ENCODE measurements at regions of chr1 and their contacts with region 1.

Region 1: DNA sequence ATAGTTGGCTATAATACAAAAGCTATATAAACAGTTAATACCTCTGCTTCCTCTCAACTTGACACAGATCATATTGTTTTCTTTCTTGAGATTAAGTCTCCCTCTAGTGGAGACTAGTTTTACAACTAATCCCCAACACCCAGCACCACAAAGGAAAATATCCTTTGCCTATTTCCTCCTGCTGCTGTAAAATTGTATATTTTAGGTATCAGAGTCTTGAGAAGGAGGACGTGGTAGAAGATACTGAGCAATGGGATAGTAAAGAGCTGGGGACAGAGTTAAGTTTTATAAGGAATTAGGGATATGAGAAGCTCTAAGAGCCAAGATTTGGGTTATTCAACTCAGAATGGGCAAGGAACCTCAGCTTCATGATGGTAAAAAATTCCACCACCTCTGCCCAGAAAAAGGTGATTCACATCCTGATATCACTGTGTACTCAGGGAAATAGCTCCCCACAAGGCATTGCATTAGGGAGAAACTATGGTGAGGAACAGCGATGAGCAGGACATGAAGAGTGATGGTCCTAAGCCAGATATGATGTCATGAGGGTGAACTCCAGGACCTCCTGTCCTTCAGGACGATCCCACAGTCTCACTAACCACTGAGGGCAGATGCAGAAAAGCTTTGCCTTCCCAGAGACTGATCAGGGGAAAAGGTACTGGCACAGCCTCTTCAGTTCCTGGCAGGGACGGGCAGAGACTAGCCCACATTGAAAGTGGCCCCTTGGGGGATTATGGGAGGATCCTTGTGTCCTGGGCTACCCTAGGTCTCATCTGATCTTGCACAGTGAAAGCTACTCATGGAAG is 14.7 kb upstream of the CFAP126 start:
- DNase-seq: no peak
- H3K4me3 Mint-ChIP-seq: no peak overlapping the region
- H3K27ac Mint-ChIP-seq: no peak overlapping the region
- H3K4me1 Mint-ChIP-seq: peaks cover 18% of the 10 kb centered on the region
- H3K27me3 Mint-ChIP-seq: no peaks in the 10 kb centered on the region

Region 2: DNA sequence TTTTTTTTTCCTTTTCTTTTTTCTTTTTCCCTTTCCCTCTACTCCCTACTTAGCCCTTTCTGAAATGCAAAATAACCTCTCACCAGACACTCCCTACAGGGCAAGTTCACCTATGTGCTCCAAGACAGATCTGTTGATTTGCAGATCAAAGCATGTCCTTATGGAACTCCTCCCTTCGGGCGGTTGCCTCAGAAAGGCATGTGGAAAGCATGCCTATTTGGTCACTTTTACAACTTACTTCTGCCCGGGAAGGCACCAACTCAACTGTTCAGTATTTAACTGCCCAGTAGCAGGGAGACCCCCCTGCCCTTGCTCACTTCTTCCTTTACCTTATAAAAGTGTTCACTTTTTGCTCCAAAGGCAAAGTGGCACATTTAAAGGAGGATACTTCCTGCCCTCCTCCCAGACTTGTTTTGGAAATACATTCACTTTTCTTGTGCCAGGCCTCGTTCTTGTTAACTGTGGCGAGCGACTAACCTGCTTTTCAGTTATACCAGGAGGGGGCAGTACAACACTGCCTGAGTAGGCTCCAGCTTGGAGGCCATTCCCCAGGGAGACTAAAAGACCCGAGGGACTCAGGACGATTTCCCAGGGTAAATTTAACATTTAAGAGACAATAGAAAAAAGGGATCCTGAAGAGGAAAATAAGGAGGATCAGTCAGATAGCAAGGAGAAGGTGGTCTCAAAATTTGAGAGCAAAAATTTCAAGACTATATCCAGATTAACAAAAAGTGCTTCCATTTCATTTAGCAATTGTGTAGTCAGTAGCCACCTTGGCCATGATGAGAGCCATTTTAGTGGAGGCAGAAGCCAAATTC is 655.7 kb before region 1 on chr1:
- CTCF ChIA-PET with region 1: no interaction called
- intact Hi-C with region 1: no loop called
- DNase-seq: peak; percentile 81
- H3K4me3 Mint-ChIP-seq: no peak overlapping the region
- H3K27ac Mint-ChIP-seq: no peak overlapping the region
- H3K4me1 Mint-ChIP-seq: peaks cover 34% of the 10 kb centered on the region
- H3K27me3 Mint-ChIP-seq: no peaks in the 10 kb centered on the region

Region 3: GRCh38 chr1:161021165-161021960 is 361.1 kb before region 1 on chr1:
- CTCF ChIA-PET with region 1: no interaction called
- intact Hi-C with region 1: no loop called
- DNase-seq: peak; percentile 94
- H3K4me3 Mint-ChIP-seq: peak overlapping the region; percentile 92
- H3K27ac Mint-ChIP-seq: peak overlapping the region; percentile 76
- H3K4me1 Mint-ChIP-seq: peaks cover 35% of the 10 kb centered on the region
- H3K27me3 Mint-ChIP-seq: no peaks in the 10 kb centered on the region

Region 4: DNA sequence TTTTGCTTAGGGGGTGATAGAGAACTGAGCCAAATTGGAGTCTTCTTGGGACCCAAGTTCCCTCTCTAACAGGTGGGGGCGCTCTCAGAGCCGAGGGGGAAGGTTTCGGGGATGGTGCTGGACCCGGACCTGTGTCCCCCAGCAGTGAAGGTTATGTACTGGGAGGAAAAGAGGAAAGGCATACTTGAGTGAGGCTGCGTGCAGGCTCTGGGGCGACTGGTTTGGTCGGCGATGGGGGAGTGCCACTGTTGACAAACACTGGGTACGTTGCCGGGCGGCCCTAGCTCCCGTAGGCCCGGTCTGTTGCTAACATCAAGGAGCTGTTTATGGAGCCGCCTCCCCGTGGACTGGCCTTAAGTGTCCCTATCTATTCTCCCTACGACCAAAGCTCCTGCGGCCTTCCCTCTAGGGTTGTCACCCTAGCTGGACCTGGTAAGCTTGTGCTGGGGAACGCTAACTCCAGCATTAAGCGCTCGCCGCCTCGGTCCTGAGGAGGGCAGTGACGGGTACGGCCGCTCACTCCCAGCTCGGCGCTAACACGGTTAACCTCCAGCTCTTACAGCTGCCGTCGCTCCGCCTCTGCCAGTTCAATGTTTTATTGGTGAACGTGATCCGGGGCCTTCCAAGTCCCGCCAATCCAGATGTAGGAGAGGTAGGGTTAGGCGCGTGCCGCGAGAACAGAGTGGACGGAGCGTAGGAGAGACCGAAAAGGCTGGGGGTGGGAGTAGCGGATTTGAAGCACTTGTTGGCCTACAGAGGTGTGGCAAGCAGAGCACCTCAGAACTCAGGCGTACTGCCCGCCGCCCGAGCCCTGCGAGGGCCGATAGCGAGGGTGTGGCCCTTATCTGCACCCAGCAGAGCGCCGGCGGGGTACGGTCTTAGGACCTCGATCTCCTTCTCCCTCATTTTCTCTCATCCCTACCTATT is 216.4 kb before region 1 on chr1 and contains the start of gene PPOX:
- CTCF ChIA-PET with region 1: interaction called, 15 read pairs
- intact Hi-C with region 1: loop called (anchors 5 kb)
- DNase-seq: peak; percentile 97
- H3K4me3 Mint-ChIP-seq: peak within 1 kb of the TSS; percentile 87
- H3K27ac Mint-ChIP-seq: peak within 1 kb of the TSS; percentile 87
- H3K4me1 Mint-ChIP-seq: peaks cover 49% of the 10 kb centered on the region
- H3K27me3 Mint-ChIP-seq: no peaks in the 10 kb centered on the region
- total RNA-seq, gene PPOX: 24.9 to 26.0 TPM

Region 5: GRCh38 chr1:161192476-161193465 is 189.6 kb before region 1 on chr1:
- CTCF ChIA-PET with region 1: interaction called, 42 read pairs
- intact Hi-C with region 1: loop called (anchors 1 kb)
- DNase-seq: peak; percentile 84
- H3K4me3 Mint-ChIP-seq: no peak overlapping the region
- H3K27ac Mint-ChIP-seq: peak overlapping the region; percentile 51
- H3K4me1 Mint-ChIP-seq: peaks cover 34% of the 10 kb centered on the region
- H3K27me3 Mint-ChIP-seq: no peaks in the 10 kb centered on the region

Region 6: GRCh38 chr1:161209790-161210409 is 172.5 kb before region 1 on chr1:
- CTCF ChIA-PET with region 1: interaction called, 49 read pairs
- intact Hi-C with region 1: no loop called
- DNase-seq: peak; percentile 86
- H3K4me3 Mint-ChIP-seq: no peak overlapping the region
- H3K27ac Mint-ChIP-seq: peak overlapping the region; percentile 50
- H3K4me1 Mint-ChIP-seq: peaks cover 37% of the 10 kb centered on the region
- H3K27me3 Mint-ChIP-seq: no peaks in the 10 kb centered on the region

Region 7: DNA sequence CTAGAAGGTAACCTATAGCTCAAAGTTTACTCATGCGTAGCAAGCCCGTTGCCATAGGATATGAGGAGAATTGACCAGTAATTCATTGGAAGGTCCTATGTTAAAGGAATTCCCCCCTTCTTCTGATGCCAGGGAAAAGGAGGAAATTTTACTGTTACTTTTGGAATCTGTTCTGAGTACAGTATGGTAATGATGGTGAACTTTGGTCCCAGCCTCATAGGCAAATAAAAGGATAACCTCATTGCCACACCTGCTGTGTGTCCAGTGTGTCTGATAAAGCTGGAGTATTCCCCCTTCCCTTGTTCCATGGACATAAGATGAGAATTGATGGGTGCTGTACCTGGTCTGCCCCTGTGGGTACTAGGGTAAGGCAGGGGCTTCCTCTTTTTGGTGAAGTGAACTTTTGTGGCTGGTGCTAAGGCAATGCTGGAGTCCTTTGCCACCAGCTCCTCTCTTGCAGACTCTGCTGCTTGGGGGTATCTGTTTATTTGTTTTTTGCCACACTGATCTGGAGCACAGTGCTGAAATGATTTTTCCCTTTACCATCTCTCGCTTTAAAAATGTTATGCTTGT is 94.8 kb before region 1 on chr1:
- CTCF ChIA-PET with region 1: interaction called, 34 read pairs
- intact Hi-C with region 1: no loop called
- DNase-seq: no peak
- H3K4me3 Mint-ChIP-seq: no peak overlapping the region
- H3K27ac Mint-ChIP-seq: no peak overlapping the region
- H3K4me1 Mint-ChIP-seq: no peaks in the 10 kb centered on the region
- H3K27me3 Mint-ChIP-seq: no peaks in the 10 kb centered on the region

Region 8: GRCh38 chr1:161305867-161306519 is 76.4 kb before region 1 on chr1:
- CTCF ChIA-PET with region 1: interaction called, 11 read pairs
- intact Hi-C with region 1: no loop called
- DNase-seq: peak; percentile 89
- H3K4me3 Mint-ChIP-seq: peak overlapping the region; percentile 96
- H3K27ac Mint-ChIP-seq: peak overlapping the region; percentile 83
- H3K4me1 Mint-ChIP-seq: peaks cover 33% of the 10 kb centered on the region
- H3K27me3 Mint-ChIP-seq: no peaks in the 10 kb centered on the region

Region 9: GRCh38 chr1:161367684-161368400 is 14.6 kb before region 1 on chr1 and contains the start of gene CFAP126:
- CTCF ChIA-PET with region 1: interaction called, 28 read pairs
- intact Hi-C with region 1: no loop called
- DNase-seq: peak; percentile 61
- H3K4me3 Mint-ChIP-seq: no peak within 1 kb of the TSS
- H3K27ac Mint-ChIP-seq: no peak within 1 kb of the TSS
- H3K4me1 Mint-ChIP-seq: peaks cover 12% of the 10 kb centered on the region
- H3K27me3 Mint-ChIP-seq: no peaks in the 10 kb centered on the region
- total RNA-seq, gene CFAP126: not detected

Measured in activated naive CD4-positive, alpha-beta T cell treated with anti-CD3 and anti-CD28 coated beads for 36 hours (primary cell).